H1 (cell line): ENCODE measurements at regions of chr3 and their contacts with region 1.

Region 1: DNA sequence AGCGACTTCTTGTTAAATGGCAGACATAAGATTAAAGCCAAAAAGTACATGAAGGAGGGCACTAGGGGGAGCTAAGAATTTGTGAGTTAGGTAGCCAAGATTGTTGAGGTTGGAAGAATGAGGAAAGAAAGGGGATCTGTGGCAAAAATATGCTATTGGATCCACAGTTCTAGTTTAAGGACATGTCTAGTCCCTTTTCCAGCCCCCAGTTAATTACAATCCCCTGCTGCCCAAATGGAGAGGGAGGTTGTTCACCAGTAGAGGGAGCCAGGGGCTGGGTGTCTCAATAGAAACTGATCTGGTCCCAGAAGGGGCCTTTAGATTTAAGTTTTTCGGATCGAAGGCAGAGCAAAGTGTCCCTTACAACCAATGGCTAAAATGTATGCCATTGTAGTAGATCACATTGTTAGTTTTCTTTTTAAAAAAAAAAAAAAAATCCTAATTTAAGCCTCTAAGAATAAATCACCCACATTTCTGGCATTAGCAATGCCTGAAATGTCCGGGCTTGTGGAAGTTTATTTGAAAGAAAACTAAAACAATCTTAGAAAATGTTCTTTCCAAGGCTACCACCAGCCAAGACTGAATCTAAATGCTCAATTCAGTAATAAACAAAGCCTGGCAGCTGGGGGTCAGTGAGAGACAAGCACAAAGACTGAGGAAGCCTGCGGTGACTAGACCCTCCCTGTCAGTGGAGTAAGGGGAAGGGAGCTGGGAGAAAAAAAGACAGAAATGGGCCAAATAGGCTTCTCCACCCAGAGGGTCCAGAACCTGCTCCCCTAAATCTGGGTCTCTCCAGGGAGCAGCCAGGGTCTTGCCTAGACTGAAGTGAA is 7.1 kb downstream of the COL8A1 start:
- DNase-seq: no peak
- H3K4me3 ChIP-seq: no peak overlapping the region
- H3K27ac ChIP-seq: no peak overlapping the region
- H3K4me1 ChIP-seq: peaks cover 0 to 4% (median 2%) of the 10 kb centered on the region in 4 experiments; a peak in 1 of 7 replicates
- H3K27me3 ChIP-seq: no peaks in the 10 kb centered on the region; a peak in 1 of 7 replicates
- CTCF ChIP-seq: peak; percentile 55 to 78 (median 72)
- EP300 ChIP-seq: no peak
- POLR2A ChIP-seq: no peak
- RAD21 ChIP-seq: peak; percentile 52 to 64; a peak in 3 of 4 replicates

Region 2: DNA sequence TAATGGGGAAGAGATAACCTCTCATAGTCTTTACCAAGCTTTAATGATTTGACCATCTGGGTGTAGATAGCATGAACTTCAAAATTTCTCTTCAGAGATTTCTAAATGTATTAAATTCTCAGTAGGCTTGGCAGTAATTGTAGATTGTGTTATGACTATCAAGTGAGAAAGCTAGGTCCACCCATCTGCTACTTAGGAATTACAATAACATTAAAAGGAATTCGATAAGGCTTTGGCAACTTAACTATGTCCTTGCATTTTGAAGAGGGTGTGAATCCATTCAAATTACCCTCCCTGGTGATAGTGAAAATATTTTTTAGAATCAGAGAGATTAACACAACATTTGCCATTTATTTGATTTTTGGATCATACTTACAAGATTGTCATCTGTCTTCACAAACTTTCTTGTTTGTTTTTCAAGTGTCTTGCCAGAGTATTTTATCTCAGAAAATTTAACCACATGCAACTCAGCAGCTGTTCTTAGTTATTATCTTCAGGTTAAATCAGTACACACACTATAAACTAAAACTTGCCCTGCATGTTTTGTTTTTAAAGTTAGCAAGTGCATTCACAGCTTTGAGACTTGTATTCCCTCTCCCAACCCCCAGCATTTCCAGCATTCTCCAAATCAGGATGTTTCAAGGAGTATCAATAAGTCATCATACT is 76.7 kb before region 1 on chr3:
- CTCF ChIA-PET with region 1: no interaction called
- POLR2A ChIA-PET with region 1: no interaction called
- DNase-seq: no peak
- H3K4me3 ChIP-seq: no peak overlapping the region
- H3K27ac ChIP-seq: no peak overlapping the region
- H3K4me1 ChIP-seq: no peaks in the 10 kb centered on the region
- H3K27me3 ChIP-seq: peaks cover 0 to under 1% (median 0%) of the 10 kb centered on the region in 4 experiments; a peak in 1 of 7 replicates
- CTCF ChIP-seq: no peak
- EP300 ChIP-seq: no peak
- POLR2A ChIP-seq: no peak
- RAD21 ChIP-seq: no peak

Region 3: GRCh38 chr3:99659032-99659431 is 13.5 kb after region 1 on chr3:
- CTCF ChIA-PET with region 1: interaction called, 49 read pairs
- POLR2A ChIA-PET with region 1: no interaction called
- DNase-seq: no peak
- H3K4me3 ChIP-seq: no peak overlapping the region
- H3K27ac ChIP-seq: no peak overlapping the region
- H3K4me1 ChIP-seq: peaks cover 0 to 3% (median 1%) of the 10 kb centered on the region in 4 experiments; a peak in 1 of 7 replicates
- H3K27me3 ChIP-seq: no peaks in the 10 kb centered on the region
- CTCF ChIP-seq: no peak
- EP300 ChIP-seq: no peak
- POLR2A ChIP-seq: no peak
- RAD21 ChIP-seq: no peak

Region 4: DNA sequence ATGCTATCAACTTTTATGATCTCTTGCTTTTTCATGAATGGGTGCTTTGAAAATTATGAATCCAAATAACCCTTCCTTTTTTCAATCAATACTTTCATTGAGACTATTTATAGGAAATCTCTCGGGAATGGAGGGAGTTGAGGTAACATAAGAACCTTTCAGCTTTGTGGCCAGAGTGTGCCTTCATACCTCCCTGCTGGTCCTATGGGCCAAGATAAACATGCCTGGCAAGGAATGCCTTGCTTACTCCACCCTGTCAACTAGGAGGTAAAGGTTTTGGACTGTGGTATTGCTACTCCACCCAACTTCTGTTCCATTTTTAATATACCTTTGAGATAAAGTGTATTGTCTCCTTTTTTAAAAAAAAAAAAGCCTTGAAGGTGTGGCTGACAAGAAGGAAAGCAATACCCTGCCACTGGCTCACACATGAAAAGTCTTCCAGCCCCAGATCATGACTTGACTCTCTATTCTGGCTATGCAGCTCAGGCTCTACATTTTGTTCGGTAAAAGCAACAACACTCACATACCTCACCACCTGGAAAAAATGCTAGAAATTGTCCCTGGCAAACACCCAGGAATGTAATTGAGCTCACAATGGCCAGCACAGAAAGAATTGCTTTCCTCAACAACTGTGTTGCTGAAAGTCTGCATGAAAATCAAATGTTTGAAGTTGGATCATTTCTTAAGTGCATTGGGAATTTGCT is 28.7 kb after region 1 on chr3:
- CTCF ChIA-PET with region 1: interaction called, 10 read pairs
- POLR2A ChIA-PET with region 1: no interaction called
- DNase-seq: no peak
- H3K4me3 ChIP-seq: no peak overlapping the region
- H3K27ac ChIP-seq: no peak overlapping the region
- H3K4me1 ChIP-seq: peaks cover 0 to 3% (median 0%) of the 10 kb centered on the region in 4 experiments; a peak in 1 of 7 replicates
- H3K27me3 ChIP-seq: no peaks in the 10 kb centered on the region
- CTCF ChIP-seq: no peak
- EP300 ChIP-seq: no peak
- POLR2A ChIP-seq: no peak
- RAD21 ChIP-seq: no peak

Region 5: DNA sequence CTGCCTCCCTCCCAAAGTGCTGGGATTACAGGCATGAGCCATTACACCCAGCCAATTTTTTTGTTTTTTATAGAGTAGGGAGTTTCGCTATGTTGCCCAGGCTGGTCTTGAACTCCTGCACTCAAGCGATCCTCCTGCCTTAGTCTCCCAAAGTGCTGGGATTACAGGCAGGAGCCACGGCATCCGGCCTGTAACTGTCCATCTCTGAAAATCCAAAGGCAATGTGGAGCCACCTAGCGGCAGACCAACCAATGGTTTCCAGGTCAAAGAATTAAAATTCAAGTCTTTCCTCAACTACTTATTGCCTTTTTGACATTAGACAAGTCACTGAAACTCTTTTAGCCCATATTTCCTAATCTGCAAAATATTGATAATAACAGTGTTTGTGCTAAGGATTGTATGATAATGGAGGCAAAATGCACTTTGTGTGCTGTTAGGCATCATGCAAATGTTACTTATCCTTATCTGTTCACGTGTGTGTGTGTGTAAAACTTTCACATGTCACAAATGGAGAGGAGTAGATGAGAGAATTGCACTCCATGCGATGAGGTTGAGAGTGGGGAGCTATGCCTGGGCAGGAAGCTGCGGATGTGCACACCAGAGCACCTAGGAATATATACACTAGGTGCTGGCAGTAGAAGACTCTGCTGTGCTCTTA is 41.6 kb after region 1 on chr3:
- CTCF ChIA-PET with region 1: interaction called, 38 read pairs
- POLR2A ChIA-PET with region 1: no interaction called
- DNase-seq: peak in 1 of 2 experiments; percentile 84
- H3K4me3 ChIP-seq: no peak overlapping the region
- H3K27ac ChIP-seq: no peak overlapping the region
- H3K4me1 ChIP-seq: no peaks in the 10 kb centered on the region
- H3K27me3 ChIP-seq: peaks cover 0 to 1% (median 0%) of the 10 kb centered on the region in 4 experiments; a peak in 1 of 7 replicates
- CTCF ChIP-seq: peak; percentile 58 to 75 (median 74)
- EP300 ChIP-seq: no peak
- POLR2A ChIP-seq: no peak
- RAD21 ChIP-seq: peak; percentile 81 to 86

Region 6: GRCh38 chr3:99753268-99753975 is 107.9 kb after region 1 on chr3:
- CTCF ChIA-PET with region 1: interaction called, 40 read pairs
- POLR2A ChIA-PET with region 1: no interaction called
- DNase-seq: peak in 1 of 2 experiments; percentile 52
- H3K4me3 ChIP-seq: no peak overlapping the region
- H3K27ac ChIP-seq: no peak overlapping the region
- H3K4me1 ChIP-seq: no peaks in the 10 kb centered on the region; a peak in 1 of 7 replicates
- H3K27me3 ChIP-seq: no peaks in the 10 kb centered on the region
- CTCF ChIP-seq: peak; percentile 9 to 79 (median 76)
- EP300 ChIP-seq: no peak
- POLR2A ChIP-seq: no peak
- RAD21 ChIP-seq: peak; percentile 93 to 96